ENCODE measurements at regions of chr6 and their contacts with region 1.

Region 1: DNA sequence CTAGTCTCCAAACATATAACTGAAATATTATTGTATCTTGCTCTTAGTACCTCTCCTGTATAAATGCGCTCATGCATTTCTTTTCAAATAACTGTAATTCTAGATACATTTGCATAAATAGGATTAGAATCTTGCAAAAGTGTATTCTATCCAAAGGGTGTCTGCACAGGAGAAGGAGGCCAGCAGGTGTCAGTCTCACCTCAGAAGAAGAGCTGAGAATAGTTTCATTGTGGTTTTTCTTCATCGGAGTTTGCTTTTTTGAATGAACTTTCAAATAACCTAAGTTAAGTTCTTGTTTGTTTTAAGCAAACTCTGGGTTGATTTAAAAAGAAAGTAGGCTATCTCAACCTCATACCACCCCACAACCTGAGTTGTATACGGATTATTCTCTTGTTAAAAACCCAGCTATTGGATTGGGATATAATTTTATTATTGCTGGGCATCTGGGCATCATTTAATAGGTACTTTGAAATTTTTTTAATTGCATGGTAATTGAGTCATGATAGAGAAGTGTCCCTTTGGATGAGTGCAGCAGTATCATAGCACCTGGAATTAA is 125.0 kb upstream of the MLIP start:
- DNase-seq: peak; percentile 43
- ATAC-seq: peak; percentile 73 to 74

Region 2: GRCh38 chr6:53811082-53811481 is 175.2 kb before region 1 on chr6:
- intact Hi-C with region 1: no loop called
- DNase-seq: no peak
- ATAC-seq: peak; percentile 21 to 72

Region 3: DNA sequence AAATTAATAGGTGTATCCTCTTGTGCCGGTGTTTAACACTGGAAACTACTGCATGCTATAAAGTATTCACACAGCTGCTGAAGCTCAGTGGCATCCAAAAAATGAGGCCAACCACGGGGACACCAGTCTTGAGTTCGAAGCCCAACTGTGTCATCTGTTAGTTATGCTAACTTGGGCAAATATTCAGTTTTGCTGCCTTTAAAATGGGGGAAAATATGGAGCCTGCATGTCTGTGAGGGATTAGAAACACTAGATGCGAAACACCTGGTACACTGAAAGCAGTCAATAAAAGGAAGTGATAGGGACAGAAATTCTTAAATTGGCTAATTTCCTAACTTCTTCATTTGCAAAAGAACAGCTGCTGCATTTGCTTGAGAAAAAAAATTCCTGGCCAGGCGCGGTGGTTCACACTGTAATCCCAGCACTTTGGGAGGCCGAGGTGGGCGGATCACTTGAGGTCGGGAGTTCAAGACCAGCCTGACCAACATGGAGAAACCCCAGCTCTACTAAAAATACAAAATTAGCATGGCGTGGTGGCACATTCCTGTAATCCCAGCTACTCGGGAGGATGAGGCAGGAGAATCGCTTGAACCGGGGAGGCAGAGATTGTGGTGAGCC is 88.4 kb after region 1 on chr6:
- intact Hi-C with region 1: no loop called
- DNase-seq: peak; percentile 35
- ATAC-seq: peak; percentile 20 to 86

Region 4: GRCh38 chr6:54267798-54268197 is 281.6 kb after region 1 on chr6:
- intact Hi-C with region 1: loop called in 1 of 2 experiments (anchors 10 kb)
- DNase-seq: no peak
- ATAC-seq: peak in 1 of 2 donors; percentile 37

Region 5: GRCh38 chr6:54621285-54621684 is 635.0 kb after region 1 on chr6:
- intact Hi-C with region 1: no loop called
- DNase-seq: no peak
- ATAC-seq: no peak

Region 6: DNA sequence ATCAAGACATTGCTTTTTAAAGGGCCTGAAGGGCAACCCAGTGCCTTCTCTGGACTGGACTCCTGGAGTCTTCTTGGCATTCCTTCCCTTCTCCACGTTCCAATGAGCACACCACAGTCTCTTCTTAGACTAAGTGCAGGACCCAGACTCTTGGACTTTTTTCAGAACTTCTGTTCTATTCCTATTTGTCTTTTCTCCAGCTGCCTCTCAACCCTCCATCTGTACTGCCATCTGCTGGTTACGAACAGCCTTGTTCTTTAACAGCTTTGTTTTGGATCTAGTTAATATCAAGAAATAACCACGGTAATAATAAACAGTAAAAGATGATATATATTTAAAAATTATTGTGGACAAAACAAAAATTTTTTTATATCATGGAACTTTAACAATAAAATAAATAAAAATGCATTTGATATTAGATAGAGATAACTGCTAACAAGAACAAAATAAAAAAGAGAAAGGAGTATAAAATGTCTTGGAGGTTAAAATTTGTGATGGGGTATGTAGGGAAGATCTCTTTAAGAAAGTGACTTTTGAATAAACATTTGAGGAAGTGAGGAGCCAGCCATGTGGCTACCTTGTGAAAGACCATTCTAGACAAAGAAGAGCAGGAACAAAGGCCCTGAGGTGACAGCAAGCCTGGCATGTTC is 1083.0 kb after region 1 on chr6:
- intact Hi-C with region 1: loop called in 1 of 2 experiments (anchors 10 kb)
- DNase-seq: no peak
- ATAC-seq: peak; percentile 36 to 61

Measured in left cardiac atrium (tissue), 4 donors.